Activated CD8-positive, alpha-beta memory T cell treated with anti-CD3 and anti-CD28 coated beads, Interleukin-2, amount 10 ng/mL, durations not matched to agents 7 days and 5 days (primary cell): ENCODE measurements at regions of chr6 and their contacts with region 1.

Region 1: DNA sequence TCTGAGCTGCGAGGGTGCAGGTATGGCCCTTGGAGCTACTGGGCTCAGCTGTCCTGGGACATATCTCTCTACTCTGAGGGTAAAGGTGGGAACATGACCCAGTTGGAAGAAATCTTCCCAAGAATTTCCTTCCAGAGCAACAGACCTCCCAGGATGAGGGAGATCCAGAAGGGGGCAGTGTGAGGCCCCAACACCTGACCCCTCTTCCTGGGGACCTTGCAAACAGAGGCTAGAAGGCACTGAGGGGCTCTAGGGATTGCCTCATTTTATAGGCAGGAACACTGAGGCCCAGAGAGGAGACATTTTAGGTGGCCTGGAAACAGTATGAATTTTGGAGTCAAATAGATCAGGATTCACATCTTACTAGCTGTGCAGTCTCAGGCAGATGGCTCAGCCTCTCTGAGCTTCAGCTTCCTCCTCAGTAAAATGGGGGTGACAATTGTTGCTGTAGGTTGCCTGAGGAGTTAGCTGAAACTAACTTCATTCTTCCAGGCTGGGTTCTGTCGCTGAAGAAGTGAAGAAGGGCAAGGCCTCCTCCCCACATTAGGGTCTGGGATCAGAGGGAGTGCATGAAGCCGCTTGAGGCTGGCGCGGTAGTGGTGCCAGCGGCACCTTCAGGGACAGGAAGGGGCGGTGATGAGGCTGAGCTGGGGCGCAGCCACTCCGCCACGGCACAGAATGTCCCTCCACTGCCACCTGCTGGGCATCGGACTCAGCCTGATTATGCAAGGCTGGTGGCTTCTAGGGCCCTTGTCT is 11.4 kb downstream of the KCNK17 start:
- DNase-seq: peak; percentile 93
- ATAC-seq: peak; percentile 99
- H3K4me3 Mint-ChIP-seq: peak overlapping the region; percentile 44
- H3K27ac Mint-ChIP-seq: peak overlapping the region; percentile 30
- H3K4me1 Mint-ChIP-seq: peaks cover 5% of the 10 kb centered on the region
- H3K27me3 Mint-ChIP-seq: peaks cover 10% of the 10 kb centered on the region

Region 2: GRCh38 chr6:38871741-38872568 is 430.9 kb before region 1 on chr6:
- CTCF ChIA-PET with region 1: interaction called, 16 read pairs
- DNase-seq: peak; percentile 75
- ATAC-seq: peak; percentile 47
- H3K4me3 Mint-ChIP-seq: no peak overlapping the region
- H3K27ac Mint-ChIP-seq: no peak overlapping the region
- H3K4me1 Mint-ChIP-seq: peaks cover 29% of the 10 kb centered on the region
- H3K27me3 Mint-ChIP-seq: peaks cover 9% of the 10 kb centered on the region

Region 3: DNA sequence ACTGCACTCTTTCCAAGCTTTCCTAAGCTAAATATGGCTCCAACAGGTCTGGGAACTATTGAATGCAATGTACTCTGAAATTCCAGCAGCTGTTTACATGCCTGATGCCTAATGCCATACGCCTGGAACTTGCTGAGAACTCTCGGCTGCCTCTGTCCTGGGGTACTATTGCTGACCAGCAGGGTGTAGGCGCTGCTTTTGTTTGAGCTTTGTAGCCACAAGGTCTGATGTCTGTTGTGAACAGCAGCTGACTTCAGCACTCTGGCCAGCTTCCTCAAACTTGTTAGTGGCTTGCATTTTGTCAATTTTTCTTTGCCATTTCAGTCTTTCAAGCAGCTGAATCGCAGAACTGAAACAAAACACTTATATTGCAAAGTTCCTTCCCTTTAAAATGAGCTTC is 214.5 kb before region 1 on chr6:
- CTCF ChIA-PET with region 1: interaction called, 15 read pairs
- DNase-seq: peak; percentile 51
- ATAC-seq: no peak
- H3K4me3 Mint-ChIP-seq: no peak overlapping the region
- H3K27ac Mint-ChIP-seq: no peak overlapping the region
- H3K4me1 Mint-ChIP-seq: peaks cover 21% of the 10 kb centered on the region
- H3K27me3 Mint-ChIP-seq: peaks cover 79% of the 10 kb centered on the region

Region 4: DNA sequence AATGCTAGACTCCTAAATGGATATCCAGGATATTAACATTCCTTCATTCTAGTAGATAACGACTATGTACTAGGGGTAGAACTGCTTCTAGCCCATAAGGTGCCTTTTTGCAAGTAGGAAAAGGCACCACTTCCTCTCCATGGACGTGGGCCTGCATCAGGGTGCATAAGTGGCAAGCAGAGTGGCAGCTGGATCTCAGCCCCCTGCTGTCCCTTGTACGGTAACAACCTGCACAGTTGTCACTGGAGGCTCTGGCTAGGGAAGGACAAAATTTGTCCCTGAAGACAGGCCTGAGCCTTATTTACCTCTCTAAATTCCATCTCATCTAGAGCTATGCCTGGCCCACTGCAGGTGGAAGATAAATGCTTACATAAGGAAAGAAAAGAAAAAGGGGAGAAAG is 145.3 kb before region 1 on chr6:
- CTCF ChIA-PET with region 1: interaction called, 25 read pairs
- DNase-seq: no peak
- ATAC-seq: no peak
- H3K4me3 Mint-ChIP-seq: no peak overlapping the region
- H3K27ac Mint-ChIP-seq: no peak overlapping the region
- H3K4me1 Mint-ChIP-seq: peaks cover 12% of the 10 kb centered on the region
- H3K27me3 Mint-ChIP-seq: no peaks in the 10 kb centered on the region

Region 5: DNA sequence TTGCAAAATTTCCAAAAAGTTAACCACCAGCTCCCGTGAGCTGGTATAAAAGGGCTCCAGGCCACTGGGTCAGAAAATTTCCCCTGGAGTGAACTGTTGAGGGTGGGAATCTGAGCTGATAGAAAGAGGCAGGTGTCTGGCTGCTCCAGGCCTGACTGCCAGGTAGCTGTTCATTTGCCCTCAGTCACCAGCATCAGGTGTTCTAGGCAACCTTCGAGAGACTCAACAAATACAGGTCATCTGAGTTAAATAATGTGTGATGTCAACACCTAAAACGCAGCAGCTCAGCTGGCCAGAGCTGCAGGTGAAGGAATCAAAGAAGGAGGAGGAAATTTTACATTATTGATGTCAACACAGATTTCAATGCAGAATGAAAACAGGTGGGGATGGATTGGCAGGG is 120.2 kb before region 1 on chr6:
- CTCF ChIA-PET with region 1: interaction called, 11 read pairs
- DNase-seq: no peak
- ATAC-seq: no peak
- H3K4me3 Mint-ChIP-seq: no peak overlapping the region
- H3K27ac Mint-ChIP-seq: no peak overlapping the region
- H3K4me1 Mint-ChIP-seq: peaks cover 1% of the 10 kb centered on the region
- H3K27me3 Mint-ChIP-seq: no peaks in the 10 kb centered on the region

Region 6: GRCh38 chr6:39218873-39219536 is 83.8 kb before region 1 on chr6:
- CTCF ChIA-PET with region 1: interaction called, 10 read pairs
- DNase-seq: peak; percentile 53
- ATAC-seq: peak; percentile 54
- H3K4me3 Mint-ChIP-seq: peak overlapping the region; percentile 30
- H3K27ac Mint-ChIP-seq: peak overlapping the region; percentile 94
- H3K4me1 Mint-ChIP-seq: peaks cover 95% of the 10 kb centered on the region
- H3K27me3 Mint-ChIP-seq: no peaks in the 10 kb centered on the region